ENCODE measurements at regions of chr16 and their contacts with region 1.

Region 1: DNA sequence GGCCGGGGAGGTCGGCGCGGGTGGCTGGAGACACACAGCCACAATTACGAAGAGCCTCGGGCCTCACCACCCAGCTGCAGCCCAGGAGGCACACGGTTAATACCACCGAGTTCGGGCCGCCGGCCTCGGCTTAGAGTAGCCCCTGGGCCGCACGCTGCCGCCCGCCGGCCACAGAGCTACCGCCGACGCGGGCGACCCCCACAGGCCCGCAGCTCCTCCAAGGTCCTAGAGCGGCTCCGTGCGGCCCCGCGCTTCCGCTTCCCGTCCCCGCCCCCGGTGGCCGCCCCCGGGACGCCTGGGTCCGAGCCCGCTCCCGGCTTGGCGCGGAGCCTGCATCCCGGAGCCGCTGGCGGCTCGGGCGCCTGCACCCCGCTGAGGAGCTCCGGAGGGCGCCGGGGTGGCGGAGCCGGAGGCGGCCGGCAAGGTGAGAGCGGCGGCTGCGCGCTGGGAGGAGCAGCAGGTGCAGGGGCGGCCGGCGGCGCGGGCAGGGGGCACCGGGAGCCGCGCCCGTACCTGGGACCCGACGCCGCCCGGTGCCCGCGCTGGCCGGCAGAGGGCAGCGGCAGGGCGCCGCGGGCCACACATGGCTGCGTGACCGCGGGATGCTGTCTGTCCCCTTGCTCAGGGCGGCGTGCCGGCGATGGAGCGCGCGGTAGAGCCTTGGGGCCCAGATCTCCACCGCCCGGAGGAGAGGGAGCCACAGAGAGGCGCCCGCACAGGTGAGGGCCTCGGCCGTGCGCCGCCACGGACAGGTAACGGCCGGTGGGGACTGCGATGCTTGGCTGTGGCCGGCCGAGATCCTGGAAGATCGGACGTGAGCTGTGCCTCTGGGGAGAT is at the start of gene ZNF48:
- DNase-seq: peak; percentile 38
- H3K4me3 Mint-ChIP-seq: peak within 1 kb of the TSS; percentile 95
- H3K27ac Mint-ChIP-seq: peak within 1 kb of the TSS; percentile 87
- H3K4me1 Mint-ChIP-seq: peaks cover 38% of the 10 kb centered on the region
- H3K27me3 Mint-ChIP-seq: no peaks in the 10 kb centered on the region
- total RNA-seq, gene ZNF48: 13.7 to 13.9 TPM

Region 2: GRCh38 chr16:30340621-30341020 is 54.8 kb before region 1 on chr16:
- CTCF ChIA-PET with region 1: no interaction called
- POLR2A ChIA-PET with region 1: no interaction called
- DNase-seq: no peak
- H3K4me3 Mint-ChIP-seq: no peak overlapping the region
- H3K27ac Mint-ChIP-seq: peak overlapping the region; percentile 78
- H3K4me1 Mint-ChIP-seq: peaks cover 19% of the 10 kb centered on the region
- H3K27me3 Mint-ChIP-seq: no peaks in the 10 kb centered on the region

Region 3: GRCh38 chr16:30382111-30382881 is 13.1 kb before region 1 on chr16 and contains the start of gene SEPTIN1:
- CTCF ChIA-PET with region 1: interaction called, 13 read pairs
- POLR2A ChIA-PET with region 1: interaction called, 9 read pairs
- DNase-seq: peak; percentile 87
- H3K4me3 Mint-ChIP-seq: peak within 1 kb of the TSS; percentile 90
- H3K27ac Mint-ChIP-seq: peak within 1 kb of the TSS; percentile 90
- H3K4me1 Mint-ChIP-seq: peaks cover 59% of the 10 kb centered on the region
- H3K27me3 Mint-ChIP-seq: no peaks in the 10 kb centered on the region
- total RNA-seq, gene SEPTIN1: 383 to 413 TPM

Region 4: GRCh38 chr16:30472328-30472942 is 77.1 kb after region 1 on chr16 and contains the start of gene ITGAL:
- CTCF ChIA-PET with region 1: no interaction called
- POLR2A ChIA-PET with region 1: no interaction called
- DNase-seq: peak; percentile 93
- H3K4me3 Mint-ChIP-seq: peak within 1 kb of the TSS; percentile 99
- H3K27ac Mint-ChIP-seq: peak within 1 kb of the TSS; percentile 92
- H3K4me1 Mint-ChIP-seq: peaks cover 61% of the 10 kb centered on the region
- H3K27me3 Mint-ChIP-seq: no peaks in the 10 kb centered on the region
- total RNA-seq, gene ITGAL: 521 to 598 TPM

Measured in activated CD4-positive, alpha-beta T cell treated with anti-CD3 and anti-CD28 coated beads, Interleukin-2, amount 10 ng/mL, durations not matched to agents 7 days and 5 days (primary cell).